ENCODE measurements at regions of chr19 and their contacts with region 1.

Region 1: GRCh38 chr19:52637718-52638585 is at the start of gene ZNF83:
- DNase-seq: peak; percentile 94
- H3K4me3 Mint-ChIP-seq: peak within 1 kb of the TSS; percentile 93
- H3K27ac Mint-ChIP-seq: peak within 1 kb of the TSS; percentile 95
- H3K4me1 Mint-ChIP-seq: peaks cover 26% of the 10 kb centered on the region
- H3K27me3 Mint-ChIP-seq: no peaks in the 10 kb centered on the region
- total RNA-seq, gene ZNF83: 23.5 and 25.8 TPM in 2 replicates

Region 2: GRCh38 chr19:52269338-52270261 is 368.4 kb before region 1 on chr19 and contains the start of gene ZNF766:
- intact Hi-C with region 1: loop called (anchors 1 kb)
- DNase-seq: peak; percentile 96
- H3K4me3 Mint-ChIP-seq: peak within 1 kb of the TSS; percentile 98
- H3K27ac Mint-ChIP-seq: peak within 1 kb of the TSS; percentile 95
- H3K4me1 Mint-ChIP-seq: peaks cover 24% of the 10 kb centered on the region
- H3K27me3 Mint-ChIP-seq: no peaks in the 10 kb centered on the region
- total RNA-seq, gene ZNF766: 13.8 and 16.5 TPM in 2 replicates

Region 3: GRCh38 chr19:52527134-52527955 is 110.6 kb before region 1 on chr19 and contains the start of gene ZNF808:
- intact Hi-C with region 1: loop called (anchors 1 kb)
- DNase-seq: peak; percentile 87
- H3K4me3 Mint-ChIP-seq: peak within 1 kb of the TSS; percentile 99
- H3K27ac Mint-ChIP-seq: peak within 1 kb of the TSS; percentile 98
- H3K4me1 Mint-ChIP-seq: peaks cover 12% of the 10 kb centered on the region
- H3K27me3 Mint-ChIP-seq: no peaks in the 10 kb centered on the region
- total RNA-seq, gene ZNF808: 19.1 and 20.0 TPM in 2 replicates

Region 4: DNA sequence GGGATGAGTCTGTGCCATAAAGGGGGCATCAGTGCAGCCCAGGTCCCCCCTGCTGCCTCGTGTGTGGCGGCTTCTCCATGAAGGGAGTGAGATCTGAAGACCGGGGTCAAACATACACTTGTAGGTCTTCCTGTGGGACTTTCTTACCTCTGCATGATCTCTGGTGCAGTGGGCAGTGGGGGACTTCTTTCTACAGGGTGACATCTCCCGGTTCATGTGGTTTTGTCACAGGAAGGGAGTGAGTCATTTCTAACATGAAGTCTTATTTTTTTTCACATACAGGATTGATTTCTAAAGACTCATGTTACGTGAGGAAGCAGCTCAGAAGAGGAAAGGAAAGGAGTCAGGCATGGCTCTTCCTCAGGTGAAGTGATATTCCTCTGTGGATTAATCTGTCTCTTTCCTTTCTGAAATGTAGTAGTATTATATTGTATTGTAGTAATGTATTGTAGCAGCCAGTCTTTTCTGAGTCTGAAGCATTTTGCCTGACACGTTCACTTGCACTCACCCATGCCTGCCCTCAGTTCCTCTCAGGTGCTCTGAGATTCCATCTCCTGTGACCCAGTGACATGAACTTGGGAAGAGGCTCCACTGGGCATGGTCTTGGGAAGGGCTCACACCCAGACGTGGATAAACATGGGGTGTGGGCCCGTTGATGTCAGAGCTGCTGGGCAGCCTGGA is 94.8 kb before region 1 on chr19:
- intact Hi-C with region 1: no loop called
- DNase-seq: peak; percentile 38
- H3K4me3 Mint-ChIP-seq: peak overlapping the region; percentile 40
- H3K27ac Mint-ChIP-seq: peak overlapping the region; percentile 51
- H3K4me1 Mint-ChIP-seq: peaks cover 15% of the 10 kb centered on the region
- H3K27me3 Mint-ChIP-seq: no peaks in the 10 kb centered on the region

Region 5: GRCh38 chr19:52601025-52601973 is 36.7 kb before region 1 on chr19:
- intact Hi-C with region 1: loop called (anchors 1 kb)
- DNase-seq: peak; percentile 89
- H3K4me3 Mint-ChIP-seq: peak overlapping the region; percentile 89
- H3K27ac Mint-ChIP-seq: peak overlapping the region; percentile 64
- H3K4me1 Mint-ChIP-seq: peaks cover 12% of the 10 kb centered on the region
- H3K27me3 Mint-ChIP-seq: no peaks in the 10 kb centered on the region

Region 6: GRCh38 chr19:52853880-52854279 is 215.9 kb after region 1 on chr19:
- intact Hi-C with region 1: loop called (anchors 1 kb)
- DNase-seq: no peak
- H3K4me3 Mint-ChIP-seq: no peak overlapping the region
- H3K27ac Mint-ChIP-seq: no peak overlapping the region
- H3K4me1 Mint-ChIP-seq: peaks cover 22% of the 10 kb centered on the region
- H3K27me3 Mint-ChIP-seq: no peaks in the 10 kb centered on the region

Region 7: GRCh38 chr19:52942386-52943133 is 304.6 kb after region 1 on chr19:
- intact Hi-C with region 1: loop called (anchors 1 kb)
- DNase-seq: peak; percentile 94
- H3K4me3 Mint-ChIP-seq: peak overlapping the region; percentile 89
- H3K27ac Mint-ChIP-seq: peak overlapping the region; percentile 88
- H3K4me1 Mint-ChIP-seq: peaks cover 27% of the 10 kb centered on the region
- H3K27me3 Mint-ChIP-seq: peaks cover 2% of the 10 kb centered on the region

Region 8: DNA sequence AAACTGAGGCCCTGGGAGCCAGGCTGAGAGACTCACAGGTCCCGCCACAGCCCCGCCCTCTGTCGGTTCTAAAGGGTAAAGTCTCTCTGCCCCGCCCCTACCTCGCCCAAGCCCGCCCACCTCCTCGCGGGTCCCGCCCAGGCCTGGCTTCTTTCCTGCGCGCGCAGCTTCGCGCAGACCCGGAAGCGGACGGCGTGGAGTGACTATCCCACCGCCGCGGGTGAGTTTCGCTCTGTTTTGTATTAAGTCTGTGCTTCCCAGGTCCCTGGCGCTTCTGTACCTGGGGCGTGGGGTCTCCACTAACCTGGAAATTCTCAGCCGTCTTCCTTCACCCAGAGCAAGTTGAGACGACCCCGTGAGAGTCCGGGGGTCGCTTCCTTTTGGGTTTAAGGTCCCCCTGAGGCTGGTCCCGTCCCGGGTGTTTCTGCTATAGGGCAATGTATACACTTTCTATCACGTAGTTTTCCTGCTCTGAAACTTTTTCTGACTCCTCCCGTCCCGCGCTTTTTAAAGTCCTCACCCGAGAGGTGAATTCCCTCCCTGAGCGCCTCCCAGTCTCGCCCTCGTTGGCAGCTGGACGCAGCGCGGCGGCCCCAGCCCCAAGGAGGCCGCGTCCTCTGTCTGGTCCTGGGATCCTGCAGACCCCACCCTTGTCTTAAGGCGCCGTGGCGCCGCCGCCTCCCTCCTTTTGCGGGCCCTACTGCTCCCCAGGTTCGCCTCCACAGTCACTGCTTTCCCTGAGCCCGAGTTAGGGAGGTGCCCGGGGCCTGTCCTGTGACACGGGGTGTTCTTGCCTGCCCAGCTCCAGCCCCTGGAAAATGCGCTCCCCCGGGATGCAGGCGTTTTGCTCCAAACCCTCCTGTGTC is 757.3 kb after region 1 on chr19 and contains the start of gene ZNF765:
- intact Hi-C with region 1: loop called (anchors 1 kb)
- DNase-seq: peak; percentile 93
- H3K4me3 Mint-ChIP-seq: peak within 1 kb of the TSS; percentile 98
- H3K27ac Mint-ChIP-seq: peak within 1 kb of the TSS; percentile 85
- H3K4me1 Mint-ChIP-seq: peaks cover 27% of the 10 kb centered on the region
- H3K27me3 Mint-ChIP-seq: no peaks in the 10 kb centered on the region
- total RNA-seq, gene ZNF765: 9.2 and 10.8 TPM in 2 replicates

Measured in activated T-helper 1 cell treated with anti-CD3 and anti-CD28 coated beads, Interleukin-12 subunit alpha, Interleukin-12 subunit beta, Interleukin-2, Interleukin-4 antibody, amounts not matched to agents 30 ng/mL and 10 ng/mL and 1 ng/mL, durations not matched to agents 14 hours and 24 hours and 36 hours (primary cell).